Natural killer cell (primary cell): ENCODE measurements at regions of chr22 and their contacts with region 1.

Region 1: DNA sequence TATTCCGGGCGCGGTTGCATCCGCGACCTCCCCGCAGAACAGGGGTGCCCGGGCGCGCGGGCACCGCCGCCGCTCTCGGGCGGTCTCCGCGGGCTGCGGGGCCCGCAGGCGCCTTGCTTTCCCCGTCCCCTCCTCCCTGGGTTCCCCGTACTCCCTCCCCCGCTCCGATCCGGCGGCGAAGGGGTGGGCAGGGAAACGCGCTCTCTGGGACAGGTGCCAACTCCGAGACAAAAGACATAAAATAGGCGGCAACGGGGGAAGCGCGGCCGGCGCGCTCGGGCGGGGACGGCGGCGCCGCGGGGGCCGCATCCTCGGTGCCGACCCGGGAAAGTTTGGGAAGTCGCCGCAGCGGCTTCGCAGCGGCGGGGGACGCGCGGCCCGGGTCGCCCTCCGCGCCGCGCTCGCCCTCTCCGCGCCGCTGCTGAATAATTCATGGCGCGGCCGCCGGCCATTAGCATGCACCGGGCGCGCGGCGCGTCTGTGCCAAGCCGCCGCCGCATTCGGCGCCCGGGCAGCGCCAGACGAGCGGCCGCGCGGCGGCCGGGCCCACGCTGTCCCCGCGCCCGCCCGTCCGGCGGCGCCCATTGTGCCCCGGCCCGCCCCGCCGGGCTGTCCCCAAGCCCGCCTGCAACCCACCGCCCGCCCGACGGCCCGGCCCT is 78.7 kb upstream of the PPARA start:
- DNase-seq: peak in 1 of 2 donors; percentile 67
- ATAC-seq: peak; percentile 1 to 22 (median 10)
- H3K4me3 ChIP-seq: peak overlapping the region; percentile 40
- H3K4me3 Mint-ChIP-seq: peak overlapping the region; percentile 89
- H3K27ac ChIP-seq: no peak overlapping the region
- H3K27ac Mint-ChIP-seq: peak overlapping the region in 1 of 2 donors; percentile 77
- H3K4me1 ChIP-seq: peaks cover 56% of the 10 kb centered on the region
- H3K4me1 Mint-ChIP-seq: peaks cover 52 to 57% of the 10 kb centered on the region in 2 donors
- H3K27me3 ChIP-seq: no peaks in the 10 kb centered on the region
- H3K27me3 Mint-ChIP-seq: no peaks in the 10 kb centered on the region
- CTCF ChIP-seq: no peak

Region 2: GRCh38 chr22:46006379-46007002 is 65.1 kb before region 1 on chr22:
- intact Hi-C with region 1: loop called (anchors 5 kb)
- DNase-seq: peak; percentile 88 to 93
- ATAC-seq: peak; percentile 65 to 85 (median 72)
- H3K4me3 ChIP-seq: no peak overlapping the region
- H3K4me3 Mint-ChIP-seq: no peak overlapping the region
- H3K27ac ChIP-seq: no peak overlapping the region
- H3K27ac Mint-ChIP-seq: peak overlapping the region in 1 of 2 donors; percentile 73
- H3K4me1 ChIP-seq: peaks cover 39% of the 10 kb centered on the region
- H3K4me1 Mint-ChIP-seq: peaks cover 13 to 27% of the 10 kb centered on the region in 2 donors
- H3K27me3 ChIP-seq: no peaks in the 10 kb centered on the region
- H3K27me3 Mint-ChIP-seq: no peaks in the 10 kb centered on the region
- CTCF ChIP-seq: peak; percentile 91

Region 3: GRCh38 chr22:46180370-46181137 is 109.0 kb after region 1 on chr22:
- intact Hi-C with region 1: no loop called
- DNase-seq: no peak
- ATAC-seq: no peak
- H3K4me3 ChIP-seq: no peak overlapping the region
- H3K4me3 Mint-ChIP-seq: no peak overlapping the region
- H3K27ac ChIP-seq: no peak overlapping the region
- H3K27ac Mint-ChIP-seq: no peak overlapping the region
- H3K4me1 ChIP-seq: peaks cover 6% of the 10 kb centered on the region
- H3K4me1 Mint-ChIP-seq: peaks cover 35 to 39% of the 10 kb centered on the region in 2 donors
- H3K27me3 ChIP-seq: no peaks in the 10 kb centered on the region
- H3K27me3 Mint-ChIP-seq: no peaks in the 10 kb centered on the region
- CTCF ChIP-seq: no peak